Colonic mucosa (tissue), 4 donors: ENCODE measurements at regions of chr14 and their contacts with region 1.

Region 1: GRCh38 chr14:101953151-101953550 is 11.2 kb upstream of the DYNC1H1 start:
- DNase-seq: no peak
- H3K4me3 ChIP-seq: no peak overlapping the region
- H3K27ac ChIP-seq: no peak overlapping the region
- H3K4me1 ChIP-seq: no peaks in the 10 kb centered on the region
- H3K27me3 ChIP-seq: no peaks in the 10 kb centered on the region
- CTCF ChIP-seq: no peak

Region 2: DNA sequence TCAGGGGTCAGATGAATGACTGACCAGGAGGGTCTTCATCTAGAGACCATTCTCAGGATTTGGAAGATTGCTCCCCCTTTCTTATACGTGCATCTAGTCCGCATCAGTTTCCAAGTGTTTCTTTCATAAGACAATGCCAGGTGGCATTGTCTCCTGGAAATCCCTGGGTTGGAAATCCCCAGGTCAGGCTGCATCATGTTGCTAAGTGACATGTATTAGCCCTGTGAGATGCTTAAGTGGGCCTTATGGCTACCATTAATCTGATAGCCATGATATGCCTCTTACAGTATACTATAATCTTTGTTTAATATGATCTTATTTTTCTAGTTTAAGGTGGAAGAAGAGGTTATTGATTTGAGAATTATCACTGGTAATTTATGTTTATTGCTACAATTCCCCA is 299.1 kb before region 1 on chr14:
- intact Hi-C with region 1: no loop called
- DNase-seq: no peak
- H3K4me3 ChIP-seq: no peak overlapping the region
- H3K27ac ChIP-seq: no peak overlapping the region
- H3K4me1 ChIP-seq: no peaks in the 10 kb centered on the region
- H3K27me3 ChIP-seq: no peaks in the 10 kb centered on the region
- CTCF ChIP-seq: no peak

Region 3: GRCh38 chr14:101707068-101707842 is 245.9 kb before region 1 on chr14:
- intact Hi-C with region 1: loop called (anchors 5 kb)
- DNase-seq: peak; percentile 68
- H3K4me3 ChIP-seq: no peak overlapping the region
- H3K27ac ChIP-seq: no peak overlapping the region
- H3K4me1 ChIP-seq: peaks cover 14% of the 10 kb centered on the region
- H3K27me3 ChIP-seq: no peaks in the 10 kb centered on the region
- CTCF ChIP-seq: peak; percentile 85

Region 4: GRCh38 chr14:101767618-101768362 is 185.4 kb before region 1 on chr14:
- intact Hi-C with region 1: loop called (anchors 5 kb)
- DNase-seq: no peak
- H3K4me3 ChIP-seq: no peak overlapping the region
- H3K27ac ChIP-seq: no peak overlapping the region
- H3K4me1 ChIP-seq: peaks cover 8% of the 10 kb centered on the region
- H3K27me3 ChIP-seq: no peaks in the 10 kb centered on the region
- CTCF ChIP-seq: no peak